ENCODE measurements at regions of chr17 and their contacts with region 1.

Region 1: DNA sequence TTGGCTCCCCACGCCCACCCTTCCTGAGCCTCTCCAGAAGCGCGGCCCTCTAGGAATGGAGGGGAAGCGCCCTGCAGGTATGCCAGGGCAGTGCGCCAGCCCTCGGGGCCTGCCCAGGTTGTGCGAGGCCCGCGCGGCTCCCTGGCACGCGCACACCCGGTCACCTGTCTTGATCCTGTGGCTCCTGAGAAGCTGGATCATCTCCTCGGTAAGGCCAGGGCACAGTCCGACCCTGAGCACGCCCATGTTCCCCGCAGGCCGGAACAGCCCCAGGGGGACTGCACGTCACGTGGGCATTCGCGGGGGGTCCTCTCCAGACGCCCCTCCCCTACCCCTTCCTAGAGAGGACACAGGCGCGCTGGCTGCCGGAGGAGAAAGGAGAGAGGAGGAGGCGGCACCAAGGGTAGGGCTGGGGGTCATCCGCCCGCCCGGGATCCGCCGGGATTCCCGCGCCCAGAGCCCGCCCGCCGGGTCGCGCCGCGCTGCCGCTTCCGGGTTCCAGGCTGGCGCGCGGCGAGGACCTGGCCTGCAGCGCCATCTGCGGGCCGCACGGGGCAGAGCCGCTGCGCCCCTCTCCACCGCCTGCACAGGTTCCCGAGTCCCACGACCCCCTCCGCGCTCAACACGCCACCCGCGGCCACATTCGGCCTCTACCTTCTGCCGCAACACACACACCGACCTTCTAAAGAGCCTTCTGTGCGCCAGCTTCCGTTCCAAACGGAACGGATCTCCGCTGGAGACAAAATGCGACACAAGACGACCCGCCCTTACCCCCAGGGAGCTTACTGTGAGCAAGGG is at the start of gene RAD51D:
- DNase-seq: peak; percentile 72
- total RNA-seq, gene RAD51D: 8.1 and 12.9 TPM in 2 replicates

Region 2: DNA sequence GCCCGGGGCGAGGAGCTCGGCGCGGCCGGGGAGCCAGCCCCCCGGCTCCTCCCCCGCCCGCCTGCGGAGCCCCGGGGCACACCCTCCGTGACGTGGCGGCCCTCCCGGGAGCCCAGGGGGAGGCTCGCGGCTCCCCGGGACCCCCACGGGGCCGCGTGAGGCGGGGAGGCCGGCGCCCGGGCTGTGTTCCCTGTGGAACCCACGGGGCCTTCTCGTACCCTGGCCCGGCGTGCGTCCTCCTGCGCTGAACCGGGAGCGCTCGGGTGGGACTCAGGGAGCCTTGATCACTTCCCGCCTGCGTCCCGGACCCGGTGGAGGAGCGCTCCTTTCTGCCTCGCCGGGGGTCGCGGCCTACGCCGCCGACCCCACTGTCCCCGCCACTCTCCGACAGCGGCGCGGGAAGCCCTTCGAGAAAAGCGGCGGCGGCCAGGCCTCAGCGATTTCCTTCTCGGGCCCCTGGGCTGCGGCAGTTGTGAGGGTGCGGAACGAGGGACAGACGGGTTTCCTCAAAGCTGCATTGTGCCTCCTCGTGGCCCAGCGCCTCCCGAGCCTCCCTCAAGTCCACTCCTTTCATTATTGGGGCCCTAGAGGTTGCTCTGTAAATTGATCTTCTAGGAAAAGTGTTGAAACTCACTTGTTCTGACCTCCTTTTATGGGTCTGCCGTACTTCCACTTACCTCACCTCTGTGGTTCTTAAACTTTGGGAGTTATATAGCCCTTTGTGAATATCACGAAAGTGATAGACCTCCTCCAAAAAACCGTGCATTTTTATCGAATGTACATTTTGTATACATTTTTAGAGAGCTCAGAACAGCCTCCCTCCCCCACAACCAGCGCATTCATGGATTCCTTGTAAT is 138.7 kb before region 1 on chr17:
- in situ Hi-C with region 1: loop called (anchors 25 kb)
- DNase-seq: peak; percentile 69

Region 3: GRCh38 chr17:35051183-35051578 is 68.4 kb before region 1 on chr17:
- in situ Hi-C with region 1: no loop called
- DNase-seq: no peak

Region 4: DNA sequence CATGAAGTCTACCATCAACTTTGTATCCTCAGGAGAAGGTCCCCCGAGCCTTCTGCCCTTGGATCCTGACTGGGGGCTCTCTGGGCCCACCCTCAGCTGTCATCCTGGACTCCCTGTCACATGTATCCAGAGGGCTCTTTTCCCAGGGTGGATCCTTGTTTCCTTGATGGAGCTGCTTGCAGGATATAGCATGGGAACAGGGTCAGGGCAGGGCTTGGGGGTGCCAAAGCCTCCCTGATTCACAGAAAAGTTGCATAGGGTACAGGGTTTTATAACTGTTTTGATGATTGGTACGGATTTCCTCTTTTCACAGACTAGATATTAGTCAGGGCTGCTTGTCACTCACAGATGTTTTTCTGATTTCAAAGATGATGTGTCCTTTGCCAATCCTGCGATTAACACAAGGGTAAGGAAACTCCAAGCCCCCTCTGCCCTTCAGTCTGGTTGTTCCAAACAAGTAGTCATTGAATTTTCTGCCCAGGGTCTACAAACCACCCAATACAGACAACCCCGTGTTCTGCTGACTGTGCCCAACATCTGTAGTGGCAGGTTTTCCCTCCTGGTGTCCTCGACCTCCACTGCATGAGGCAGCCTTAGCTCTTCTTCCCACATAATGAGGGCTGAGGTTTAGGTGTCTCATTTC is 95.2 kb after region 1 on chr17:
- in situ Hi-C with region 1: no loop called
- DNase-seq: no peak